ENCODE measurements at regions of chr2 and their contacts with region 1.

Region 1: DNA sequence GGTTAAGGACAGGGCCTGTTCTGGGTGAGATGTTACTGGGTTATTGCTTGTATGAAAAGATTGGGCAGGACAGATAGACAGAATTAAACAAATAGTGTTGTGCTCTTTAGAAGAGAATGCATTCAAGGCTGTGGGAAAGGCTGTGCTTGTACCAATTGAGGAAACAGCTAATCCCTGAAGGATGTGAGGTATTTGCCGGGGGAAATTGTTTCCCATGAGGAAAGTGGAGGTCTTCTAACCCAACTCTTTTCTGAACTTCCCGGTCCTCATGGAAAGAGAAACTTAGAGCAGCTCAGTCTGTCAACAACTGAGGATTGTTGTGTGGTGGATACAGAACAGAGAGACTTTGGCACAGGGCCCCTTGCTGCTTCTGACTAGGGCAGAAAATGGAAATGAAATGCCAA is 9.5 kb downstream of the SLC1A4 start:
- DNase-seq: peak; percentile 94
- H3K4me3 ChIP-seq: no peak overlapping the region
- H3K27ac ChIP-seq: peak overlapping the region; percentile 47
- H3K4me1 ChIP-seq: peaks cover 11% of the 10 kb centered on the region
- H3K27me3 ChIP-seq: no peaks in the 10 kb centered on the region
- CTCF ChIP-seq: no peak
- POLR2A ChIP-seq: no peak

Region 2: DNA sequence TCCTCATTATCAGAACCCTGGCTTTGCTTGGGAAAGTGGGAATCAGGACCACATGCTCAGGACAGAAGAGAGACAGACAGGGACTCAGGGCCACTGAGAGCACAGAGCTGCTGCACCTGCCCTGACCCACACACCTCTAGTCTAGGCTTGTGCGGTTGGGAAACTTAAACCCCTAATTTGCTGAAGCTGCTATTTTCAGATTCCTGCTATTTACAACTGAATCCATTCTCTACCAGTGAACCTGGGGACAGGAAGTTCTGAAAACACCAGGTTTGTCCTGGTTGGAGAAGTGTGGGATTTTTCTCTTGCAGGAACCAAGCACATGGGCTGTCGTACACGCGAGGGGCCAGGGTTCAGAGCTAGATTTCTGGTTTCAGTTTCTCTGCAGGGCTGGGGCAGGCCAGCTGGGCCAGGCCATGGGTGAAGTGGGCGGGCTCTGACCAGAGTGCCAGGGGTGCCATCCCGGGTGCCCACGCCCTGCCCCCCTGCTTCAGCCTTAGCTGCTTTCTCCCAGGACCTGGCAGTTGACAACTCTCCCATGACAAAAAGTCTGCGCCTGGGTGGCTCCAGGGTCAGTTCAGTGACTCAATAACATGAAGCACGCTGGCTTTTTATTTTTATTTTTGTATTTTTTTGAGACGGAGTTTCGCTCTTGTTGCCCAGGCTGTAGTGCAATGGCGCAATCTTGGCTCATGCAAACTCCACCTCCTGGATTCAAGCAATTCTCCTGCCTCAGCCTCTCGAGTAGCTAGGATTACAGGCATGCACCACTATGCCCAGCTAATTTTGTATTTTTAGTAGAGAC is 60.8 kb before region 1 on chr2:
- CTCF ChIA-PET with region 1: no interaction called
- POLR2A ChIA-PET with region 1: no interaction called
- dilution Hi-C with region 1: no loop called
- intact Hi-C with region 1: no loop called
- DNase-seq: no peak
- H3K4me3 ChIP-seq: no peak overlapping the region
- H3K27ac ChIP-seq: no peak overlapping the region
- H3K4me1 ChIP-seq: no peaks in the 10 kb centered on the region
- H3K27me3 ChIP-seq: peaks cover 5 to 7% of the 10 kb centered on the region in 2 experiments
- CTCF ChIP-seq: no peak
- POLR2A ChIP-seq: no peak

Region 3: GRCh38 chr2:64988420-64989125 is 10.1 kb before region 1 on chr2:
- CTCF ChIA-PET with region 1: interaction called, 3 read pairs
- POLR2A ChIA-PET with region 1: interaction called, 3 read pairs
- dilution Hi-C with region 1: no loop called
- intact Hi-C with region 1: loop called (anchors 1 kb)
- DNase-seq: peak; percentile 79
- H3K4me3 ChIP-seq: peak overlapping the region; percentile 54 to 69 (median 67)
- H3K27ac ChIP-seq: peak overlapping the region; percentile 94
- H3K4me1 ChIP-seq: peaks cover 15% of the 10 kb centered on the region
- H3K27me3 ChIP-seq: peaks cover 0 to 4% of the 10 kb centered on the region in 2 experiments
- CTCF ChIP-seq: peak in 1 of 2 donors; percentile 51
- POLR2A ChIP-seq: peak; percentile 73

Region 4: DNA sequence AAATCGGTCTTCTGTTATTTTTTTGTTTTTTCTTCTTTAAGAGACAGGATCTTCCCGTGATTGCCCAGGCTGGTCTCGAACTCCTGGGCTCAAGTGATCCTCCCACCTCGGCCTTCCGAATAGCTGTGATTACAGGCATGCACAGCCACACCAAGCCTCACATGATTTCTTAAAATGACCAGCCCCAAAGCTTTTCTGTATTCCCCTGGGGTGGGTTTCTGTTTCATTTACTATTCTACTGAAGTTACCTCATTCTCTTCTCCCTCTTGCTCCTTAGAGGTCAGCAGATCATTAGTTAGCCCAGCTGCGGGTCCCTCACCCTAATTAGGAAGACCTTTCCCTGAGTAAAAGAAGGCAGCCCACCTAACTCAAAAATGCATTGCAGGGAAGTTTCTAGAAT is 18.1 kb after region 1 on chr2:
- CTCF ChIA-PET with region 1: no interaction called
- POLR2A ChIA-PET with region 1: no interaction called
- dilution Hi-C with region 1: no loop called
- intact Hi-C with region 1: no loop called
- DNase-seq: no peak
- H3K4me3 ChIP-seq: no peak overlapping the region
- H3K27ac ChIP-seq: no peak overlapping the region
- H3K4me1 ChIP-seq: no peaks in the 10 kb centered on the region
- H3K27me3 ChIP-seq: no peaks in the 10 kb centered on the region
- CTCF ChIP-seq: no peak
- POLR2A ChIP-seq: no peak

Measured in endothelial cell of umbilical vein (primary cell).